CD8-positive, alpha-beta T cell (primary cell): ENCODE measurements at regions of chr7 and their contacts with region 1.

Region 1: GRCh38 chr7:122528879-122529481 is 169.9 kb downstream of the RNF133 start:
- DNase-seq: peak in 1 of 9 experiments; percentile 1
- ATAC-seq: no peak
- H3K4me3 ChIP-seq: no peak overlapping the region
- H3K4me3 Mint-ChIP-seq: no peak overlapping the region
- H3K27ac ChIP-seq: no peak overlapping the region
- H3K27ac Mint-ChIP-seq: no peak overlapping the region
- H3K4me1 ChIP-seq: no peaks in the 10 kb centered on the region
- H3K4me1 Mint-ChIP-seq: no peaks in the 10 kb centered on the region
- H3K27me3 ChIP-seq: no peaks in the 10 kb centered on the region
- H3K27me3 Mint-ChIP-seq: no peaks in the 10 kb centered on the region
- CTCF ChIP-seq: no peak

Region 2: GRCh38 chr7:122092964-122093797 is 435.8 kb before region 1 on chr7:
- CTCF ChIA-PET with region 1: no interaction called
- POLR2A ChIA-PET with region 1: no interaction called
- intact Hi-C with region 1: loop called in 1 of 2 experiments (anchors 5 kb)
- DNase-seq: peak in 8 of 9 experiments; percentile 14 to 65 (median 44)
- ATAC-seq: no peak
- H3K4me3 ChIP-seq: no peak overlapping the region
- H3K4me3 Mint-ChIP-seq: no peak overlapping the region
- H3K27ac ChIP-seq: no peak overlapping the region
- H3K27ac Mint-ChIP-seq: no peak overlapping the region
- H3K4me1 ChIP-seq: no peaks in the 10 kb centered on the region
- H3K4me1 Mint-ChIP-seq: no peaks in the 10 kb centered on the region
- H3K27me3 ChIP-seq: no peaks in the 10 kb centered on the region
- H3K27me3 Mint-ChIP-seq: no peaks in the 10 kb centered on the region
- CTCF ChIP-seq: no peak

Region 3: GRCh38 chr7:122485856-122486255 is 43.1 kb before region 1 on chr7:
- CTCF ChIA-PET with region 1: no interaction called
- POLR2A ChIA-PET with region 1: no interaction called
- intact Hi-C with region 1: no loop called
- DNase-seq: no peak
- ATAC-seq: no peak
- H3K4me3 ChIP-seq: no peak overlapping the region
- H3K4me3 Mint-ChIP-seq: no peak overlapping the region
- H3K27ac ChIP-seq: no peak overlapping the region
- H3K27ac Mint-ChIP-seq: no peak overlapping the region
- H3K4me1 ChIP-seq: no peaks in the 10 kb centered on the region
- H3K4me1 Mint-ChIP-seq: no peaks in the 10 kb centered on the region
- H3K27me3 ChIP-seq: no peaks in the 10 kb centered on the region
- H3K27me3 Mint-ChIP-seq: no peaks in the 10 kb centered on the region
- CTCF ChIP-seq: no peak

Region 4: GRCh38 chr7:122550545-122550944 is 21.6 kb after region 1 on chr7:
- CTCF ChIA-PET with region 1: no interaction called
- POLR2A ChIA-PET with region 1: no interaction called
- intact Hi-C with region 1: no loop called
- DNase-seq: no peak
- ATAC-seq: no peak
- H3K4me3 ChIP-seq: no peak overlapping the region
- H3K4me3 Mint-ChIP-seq: no peak overlapping the region
- H3K27ac ChIP-seq: no peak overlapping the region
- H3K27ac Mint-ChIP-seq: no peak overlapping the region
- H3K4me1 ChIP-seq: no peaks in the 10 kb centered on the region
- H3K4me1 Mint-ChIP-seq: no peaks in the 10 kb centered on the region
- H3K27me3 ChIP-seq: no peaks in the 10 kb centered on the region
- H3K27me3 Mint-ChIP-seq: no peaks in the 10 kb centered on the region
- CTCF ChIP-seq: no peak